ENCODE measurements at regions of chr2 and their contacts with region 1.

Region 1: GRCh38 chr2:69356471-69356870 is 30.6 kb downstream of the GFPT1 start:
- DNase-seq: no peak
- H3K4me3 ChIP-seq: no peak overlapping the region
- H3K27ac ChIP-seq: no peak overlapping the region
- H3K4me1 ChIP-seq: no peaks in the 10 kb centered on the region
- H3K27me3 ChIP-seq: no peaks in the 10 kb centered on the region
- CTCF ChIP-seq: no peak

Region 2: DNA sequence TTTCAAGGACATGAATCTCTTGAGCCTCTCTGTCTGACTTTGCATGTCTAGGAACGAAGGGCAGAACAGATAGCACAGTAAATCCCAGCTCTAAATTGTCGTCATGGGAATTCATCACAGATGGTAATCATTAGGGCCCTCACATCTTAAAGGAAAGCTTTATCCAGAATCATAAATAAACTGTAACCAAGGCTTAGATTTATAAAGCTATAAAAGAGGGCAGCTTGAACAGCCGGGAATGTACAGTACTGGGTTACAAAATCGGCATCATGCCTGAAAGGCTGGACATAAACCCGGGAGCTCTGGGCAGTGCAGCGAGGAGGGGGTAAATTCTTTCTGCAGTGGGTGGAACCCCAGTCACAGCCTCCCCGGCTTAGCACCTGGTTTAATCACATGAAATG is 113.8 kb before region 1 on chr2:
- CTCF ChIA-PET with region 1: interaction called, 12 read pairs
- POLR2A ChIA-PET with region 1: no interaction called
- intact Hi-C with region 1: no loop called
- DNase-seq: no peak
- H3K4me3 ChIP-seq: no peak overlapping the region
- H3K27ac ChIP-seq: no peak overlapping the region
- H3K4me1 ChIP-seq: no peaks in the 10 kb centered on the region
- H3K27me3 ChIP-seq: no peaks in the 10 kb centered on the region
- CTCF ChIP-seq: no peak

Region 3: GRCh38 chr2:69253611-69254288 is 102.7 kb before region 1 on chr2:
- CTCF ChIA-PET with region 1: no interaction called
- POLR2A ChIA-PET with region 1: no interaction called
- intact Hi-C with region 1: no loop called
- DNase-seq: peak; percentile 45 to 58
- H3K4me3 ChIP-seq: no peak overlapping the region
- H3K27ac ChIP-seq: no peak overlapping the region
- H3K4me1 ChIP-seq: no peaks in the 10 kb centered on the region
- H3K27me3 ChIP-seq: no peaks in the 10 kb centered on the region
- CTCF ChIP-seq: no peak

Region 4: GRCh38 chr2:69525261-69525660 is 168.8 kb after region 1 on chr2:
- CTCF ChIA-PET with region 1: no interaction called
- POLR2A ChIA-PET with region 1: no interaction called
- intact Hi-C with region 1: no loop called
- DNase-seq: no peak
- H3K4me3 ChIP-seq: no peak overlapping the region
- H3K27ac ChIP-seq: no peak overlapping the region
- H3K4me1 ChIP-seq: no peaks in the 10 kb centered on the region
- H3K27me3 ChIP-seq: no peaks in the 10 kb centered on the region
- CTCF ChIP-seq: no peak

Measured in PC-9 (cell line).